Dorsolateral prefrontal cortex (tissue), 120 donors: ENCODE measurements at regions of chr22 and their contacts with region 1.

Region 1: DNA sequence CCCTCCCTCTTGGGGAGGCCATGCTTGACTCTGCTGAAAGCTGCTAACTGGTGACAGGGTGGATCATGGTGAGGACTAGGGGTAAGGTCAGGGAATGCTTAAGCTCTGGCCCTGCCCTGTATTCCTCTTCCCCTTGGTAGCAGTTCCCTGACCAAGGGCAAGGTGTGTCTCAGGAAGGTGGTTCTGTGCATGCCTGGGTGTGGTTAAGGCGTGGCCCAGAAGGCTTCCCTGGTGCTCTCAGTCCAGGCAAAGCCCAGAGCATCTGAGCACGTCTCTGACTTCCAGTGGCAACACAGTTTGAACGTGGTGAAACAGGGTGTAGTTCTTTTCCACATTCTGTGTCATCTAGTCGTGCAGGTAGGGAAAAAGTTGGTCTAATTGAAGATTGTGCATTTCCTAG is 53.1 kb upstream of the HORMAD2 start:
- DNase-seq: no peak
- H3K4me3 ChIP-seq: no peak overlapping the region
- H3K27ac ChIP-seq: peak overlapping the region in 3 of 59 donors; percentile 4 to 91 (median 80)
- H3K27me3 ChIP-seq: no peaks in the 10 kb centered on the region
- CTCF ChIP-seq: no peak

Region 2: GRCh38 chr22:29517215-29517908 is 509.8 kb before region 1 on chr22:
- intact Hi-C with region 1: no loop called
- DNase-seq: peak in 1 of 10 donors; percentile 55
- H3K4me3 ChIP-seq: no peak overlapping the region
- H3K27ac ChIP-seq: peak overlapping the region in 11 of 59 donors; percentile 13 to 59 (median 26)
- H3K27me3 ChIP-seq: no peaks in the 10 kb centered on the region
- CTCF ChIP-seq: no peak

Region 3: GRCh38 chr22:29689880-29690213 is 337.3 kb before region 1 on chr22:
- intact Hi-C with region 1: loop called in 1 of 2 experiments (anchors 10 kb)
- DNase-seq: peak; percentile 64 to 87 (median 79)
- H3K4me3 ChIP-seq: no peak overlapping the region
- H3K27ac ChIP-seq: peak overlapping the region in 31 of 59 donors; percentile 4 to 65 (median 36)
- H3K27me3 ChIP-seq: no peaks in the 10 kb centered on the region
- CTCF ChIP-seq: peak; percentile 61 to 92 (median 86)

Region 4: GRCh38 chr22:30015846-30016245 is 11.3 kb before region 1 on chr22:
- intact Hi-C with region 1: loop called in 1 of 2 experiments (anchors 1 kb)
- DNase-seq: no peak
- H3K4me3 ChIP-seq: no peak overlapping the region
- H3K27ac ChIP-seq: no peak overlapping the region
- H3K27me3 ChIP-seq: no peaks in the 10 kb centered on the region
- CTCF ChIP-seq: no peak

Region 5: GRCh38 chr22:30079952-30080533 is 52.9 kb after region 1 on chr22 and contains the start of gene HORMAD2:
- intact Hi-C with region 1: loop called in 1 of 2 experiments (anchors 10 kb)
- DNase-seq: peak in 5 of 10 donors; percentile 19 to 64 (median 44)
- H3K4me3 ChIP-seq: peak within 1 kb of the TSS in 57 of 59 donors; percentile 6 to 66 (median 46)
- H3K27ac ChIP-seq: peak within 1 kb of the TSS in 1 of 59 donors; percentile 18
- H3K27me3 ChIP-seq: peaks cover 0 to 18% (median 4%) of the 10 kb centered on the region in 45 donors
- CTCF ChIP-seq: no peak
- total RNA-seq, gene HORMAD2: 0.20 to 2.0 (median 0.59) TPM in 46 of 120 experiments, not detected in the others